ENCODE measurements at regions of chr16 and their contacts with region 1.

Region 1: DNA sequence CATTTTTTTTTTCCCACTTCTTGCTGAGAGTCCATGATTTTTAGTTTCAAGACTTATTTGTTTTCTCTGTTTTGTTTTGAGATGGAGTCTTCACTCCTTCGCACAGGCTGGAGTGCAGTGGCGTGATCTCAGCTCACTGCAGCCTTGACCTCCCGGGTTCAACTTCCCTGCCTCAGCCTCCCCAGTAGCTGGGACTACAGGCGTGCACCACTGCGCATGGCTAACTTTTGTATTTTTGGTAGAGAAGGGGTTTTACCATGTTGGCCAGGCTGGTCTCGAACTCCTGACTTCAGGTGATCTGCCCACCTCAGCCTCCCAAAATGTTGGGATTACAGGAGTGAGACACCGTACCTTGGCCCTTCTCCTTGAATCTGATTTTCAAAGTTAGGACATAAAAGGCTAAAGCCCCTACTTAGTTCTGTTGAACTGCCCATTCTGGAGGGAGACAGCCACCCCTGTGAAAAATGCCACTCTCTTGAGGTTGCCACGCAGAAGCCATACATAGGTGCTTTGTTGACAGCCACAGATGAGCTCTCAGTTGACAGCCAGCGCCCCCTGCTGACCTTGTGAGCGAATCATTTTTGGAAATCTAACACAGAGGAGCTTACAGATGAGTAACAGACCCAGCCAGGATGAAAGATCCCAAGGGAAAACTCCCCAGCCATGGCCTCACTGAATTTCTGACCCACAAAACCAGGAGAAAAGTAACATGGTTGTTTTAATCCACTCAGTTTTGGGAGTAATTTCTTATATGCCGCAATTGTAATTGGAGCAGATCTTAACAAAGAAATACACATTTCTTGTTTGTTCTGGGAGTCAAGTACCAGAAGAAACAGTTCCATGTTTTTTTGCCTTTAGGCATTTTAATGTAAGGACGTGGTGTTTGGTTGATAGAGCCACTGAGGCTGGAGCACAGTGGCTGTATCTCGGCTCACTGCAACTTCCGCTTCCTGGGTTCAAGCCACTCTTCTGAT is 38.8 kb downstream of the PKD1L3 start:
- DNase-seq: peak; percentile 69 to 88
- H3K4me3 ChIP-seq: no peak overlapping the region
- H3K27ac ChIP-seq: no peak overlapping the region
- H3K4me1 ChIP-seq: no peaks in the 10 kb centered on the region
- H3K27me3 ChIP-seq: no peaks in the 10 kb centered on the region
- CTCF ChIP-seq: peak; percentile 75 to 84 (median 80)
- EP300 ChIP-seq: no peak
- POLR2A ChIP-seq: no peak
- RAD21 ChIP-seq: peak; percentile 87 to 91

Region 2: GRCh38 chr16:71912534-71913253 is 48.7 kb before region 1 on chr16:
- CTCF ChIA-PET with region 1: interaction called, 11 read pairs
- POLR2A ChIA-PET with region 1: no interaction called
- DNase-seq: no peak
- H3K4me3 ChIP-seq: no peak overlapping the region
- H3K27ac ChIP-seq: no peak overlapping the region
- H3K4me1 ChIP-seq: peaks cover 0 to 2% (median under 1%) of the 10 kb centered on the region in 4 experiments; a peak in 5 of 7 replicates
- H3K27me3 ChIP-seq: no peaks in the 10 kb centered on the region
- CTCF ChIP-seq: no peak
- EP300 ChIP-seq: no peak
- POLR2A ChIP-seq: no peak
- RAD21 ChIP-seq: no peak

Region 3: DNA sequence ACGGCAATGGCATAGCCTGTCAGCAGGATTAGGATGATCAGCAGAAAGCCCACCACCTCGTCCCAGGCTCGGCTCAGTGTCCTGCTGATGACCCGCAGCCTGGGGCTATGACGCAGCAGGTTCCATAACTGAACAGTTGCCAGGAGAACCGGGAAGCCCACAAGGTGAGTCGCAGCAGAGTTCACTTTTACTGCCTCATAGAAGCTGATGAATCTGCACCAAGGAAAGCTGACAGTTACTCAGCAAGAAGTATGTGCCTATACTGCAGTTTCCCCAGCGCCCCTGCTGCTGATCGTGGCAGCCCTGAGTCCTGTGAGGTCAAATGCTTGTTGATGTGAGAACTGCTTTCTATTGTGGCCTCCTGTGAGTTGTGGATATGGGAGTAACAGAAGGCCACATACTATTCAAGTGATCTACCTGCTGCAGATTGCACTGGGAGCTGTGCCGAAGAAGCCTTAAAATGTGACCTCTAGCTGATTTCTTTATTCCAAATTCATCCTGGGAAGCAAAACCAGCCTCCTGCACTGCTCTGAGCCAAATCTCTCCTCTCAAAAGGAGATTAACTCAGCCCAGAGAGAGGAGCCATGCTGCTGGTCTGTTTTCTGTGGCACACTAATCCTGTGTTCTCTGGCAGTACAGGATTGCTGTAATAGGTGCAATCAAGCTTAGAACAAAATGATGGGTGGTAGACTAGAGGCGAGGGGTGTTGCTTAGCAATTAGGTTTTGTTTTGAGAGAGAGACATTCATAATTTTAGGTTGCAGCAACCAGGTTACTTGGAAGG is 27.2 kb before region 1 on chr16:
- CTCF ChIA-PET with region 1: interaction called, 20 read pairs
- POLR2A ChIA-PET with region 1: interaction called, 4 read pairs
- DNase-seq: no peak
- H3K4me3 ChIP-seq: no peak overlapping the region
- H3K27ac ChIP-seq: no peak overlapping the region
- H3K4me1 ChIP-seq: peaks cover 0 to 2% (median 0%) of the 10 kb centered on the region in 4 experiments; a peak in 3 of 7 replicates
- H3K27me3 ChIP-seq: no peaks in the 10 kb centered on the region
- CTCF ChIP-seq: no peak
- EP300 ChIP-seq: no peak
- POLR2A ChIP-seq: no peak
- RAD21 ChIP-seq: no peak

Region 4: DNA sequence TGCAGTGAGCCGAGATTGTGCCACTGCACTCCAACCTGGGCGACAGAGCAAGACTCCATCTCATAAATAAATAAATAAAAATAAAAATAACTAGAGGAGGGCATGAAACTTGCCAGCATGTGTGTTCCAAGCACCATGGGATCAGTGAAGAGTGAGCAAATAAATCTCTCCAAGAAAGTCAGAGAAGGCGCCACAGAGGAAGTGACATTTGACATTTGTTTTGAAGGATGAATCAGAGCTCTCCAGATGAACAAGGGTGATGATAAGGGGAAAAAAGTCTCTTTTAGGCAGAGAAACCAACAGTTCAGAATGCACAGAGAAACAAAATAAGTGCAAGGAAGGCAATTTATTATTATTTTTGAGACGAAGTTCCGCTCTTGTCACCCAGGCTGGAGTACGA is 15.7 kb before region 1 on chr16:
- CTCF ChIA-PET with region 1: interaction called, 11 read pairs
- POLR2A ChIA-PET with region 1: no interaction called
- DNase-seq: no peak
- H3K4me3 ChIP-seq: no peak overlapping the region
- H3K27ac ChIP-seq: no peak overlapping the region
- H3K4me1 ChIP-seq: no peaks in the 10 kb centered on the region
- H3K27me3 ChIP-seq: no peaks in the 10 kb centered on the region; a peak in 3 of 7 replicates
- CTCF ChIP-seq: no peak
- EP300 ChIP-seq: no peak
- POLR2A ChIP-seq: no peak
- RAD21 ChIP-seq: no peak

Region 5: GRCh38 chr16:71974068-71974818 is 12.9 kb after region 1 on chr16:
- CTCF ChIA-PET with region 1: interaction called, 33 read pairs
- POLR2A ChIA-PET with region 1: interaction called, 3 read pairs
- DNase-seq: no peak
- H3K4me3 ChIP-seq: no peak overlapping the region
- H3K27ac ChIP-seq: no peak overlapping the region
- H3K4me1 ChIP-seq: no peaks in the 10 kb centered on the region
- H3K27me3 ChIP-seq: no peaks in the 10 kb centered on the region; a peak in 1 of 7 replicates
- CTCF ChIP-seq: no peak
- EP300 ChIP-seq: no peak
- POLR2A ChIP-seq: no peak
- RAD21 ChIP-seq: no peak

Region 6: DNA sequence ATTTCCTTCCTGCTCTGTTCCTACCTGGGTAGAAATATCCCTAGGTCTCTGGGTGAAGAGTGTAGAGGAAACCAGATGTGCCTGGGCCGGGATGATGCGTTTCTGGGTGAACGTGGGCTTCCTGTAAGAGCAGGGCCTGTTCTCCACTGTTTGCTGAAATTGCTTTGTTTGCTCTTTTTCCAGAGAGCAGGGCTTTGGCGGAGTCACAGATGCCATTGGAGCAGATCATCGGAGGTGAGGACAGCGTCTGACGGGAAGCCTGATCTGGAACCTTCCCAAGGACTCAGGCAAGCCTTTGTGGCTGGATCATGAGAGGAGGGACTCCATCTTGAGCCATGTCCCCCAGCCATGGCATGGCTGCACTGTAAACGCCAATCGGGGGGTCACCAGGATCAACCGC is 62.6 kb after region 1 on chr16:
- CTCF ChIA-PET with region 1: no interaction called
- POLR2A ChIA-PET with region 1: no interaction called
- DNase-seq: no peak
- H3K4me3 ChIP-seq: no peak overlapping the region
- H3K27ac ChIP-seq: no peak overlapping the region
- H3K4me1 ChIP-seq: no peaks in the 10 kb centered on the region
- H3K27me3 ChIP-seq: no peaks in the 10 kb centered on the region
- CTCF ChIP-seq: no peak
- EP300 ChIP-seq: no peak
- POLR2A ChIP-seq: no peak
- RAD21 ChIP-seq: no peak

Measured in H1 (cell line).